ENCODE measurements at regions of chr3 and their contacts with region 1.

Region 1: GRCh38 chr3:112327371-112327951 is 5.5 kb upstream of the CD200 start:
- DNase-seq: peak in 1 of 10 donors; percentile 37

Region 2: GRCh38 chr3:112293368-112294321 is 33.8 kb before region 1 on chr3 and contains the start of gene SLC9C1:
- intact Hi-C with region 1: loop called (anchors 5 kb)
- DNase-seq: peak in 2 of 10 donors; percentile 32 to 47

Measured in posterior cingulate gyrus (tissue), 11 donors.